AG04449 (cell line): ENCODE measurements at regions of chr6 and their contacts with region 1.

Region 1: GRCh38 chr6:30378290-30378937 is 33.5 kb downstream of the RPP21 start:
- DNase-seq: no peak
- H3K4me3 ChIP-seq: no peak overlapping the region
- CTCF ChIP-seq: no peak

Region 2: GRCh38 chr6:29995340-29995777 is 383.1 kb before region 1 on chr6:
- CTCF ChIA-PET with region 1: no interaction called
- POLR2A ChIA-PET with region 1: no interaction called
- DNase-seq: no peak
- H3K4me3 ChIP-seq: no peak overlapping the region
- CTCF ChIP-seq: no peak

Region 3: DNA sequence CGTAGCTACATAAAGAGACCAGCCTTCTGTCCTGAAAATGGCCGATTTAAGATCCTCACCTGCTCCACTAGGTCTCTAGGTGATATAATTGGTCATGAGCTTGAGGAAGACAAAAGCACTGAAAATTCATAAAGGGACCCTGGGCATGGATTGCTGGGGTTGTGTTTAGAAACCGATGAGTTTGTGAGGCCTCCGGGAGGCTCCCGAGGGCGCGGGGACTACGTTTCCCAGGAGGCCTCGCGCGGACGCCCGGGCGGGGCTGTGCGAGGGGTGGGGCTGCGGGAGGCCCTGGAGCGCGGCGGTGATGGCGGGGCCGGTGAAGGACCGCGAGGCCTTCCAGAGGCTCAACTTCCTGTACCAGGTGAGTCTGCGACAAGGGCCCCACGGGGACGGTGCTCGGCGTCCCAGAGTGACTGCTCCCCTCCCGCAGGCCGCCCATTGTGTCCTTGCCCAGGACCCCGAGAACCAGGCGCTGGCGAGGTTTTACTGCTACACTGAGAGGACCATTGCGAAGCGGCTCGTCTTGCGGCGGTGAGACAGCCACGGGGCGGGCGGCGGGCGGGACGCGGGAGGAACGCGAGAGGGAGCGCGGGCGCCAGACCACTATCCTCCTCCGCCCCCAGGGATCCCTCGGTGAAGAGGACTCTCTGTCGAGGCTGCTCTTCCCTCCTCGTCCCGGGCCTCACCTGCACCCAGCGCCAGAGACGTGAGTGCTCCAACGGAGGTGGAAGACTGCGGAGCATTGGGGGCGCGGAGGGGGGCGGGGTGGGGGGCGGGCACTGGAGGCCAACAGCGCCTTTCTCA is 33.3 kb before region 1 on chr6 and contains the start of gene RPP21:
- CTCF ChIA-PET with region 1: no interaction called
- POLR2A ChIA-PET with region 1: no interaction called
- DNase-seq: no peak
- H3K4me3 ChIP-seq: peak within 1 kb of the TSS; percentile 92
- CTCF ChIP-seq: no peak

Region 4: GRCh38 chr6:30357678-30358540 is 20.5 kb before region 1 on chr6:
- CTCF ChIA-PET with region 1: interaction called, 10 read pairs
- POLR2A ChIA-PET with region 1: no interaction called
- DNase-seq: peak; percentile 17
- H3K4me3 ChIP-seq: peak overlapping the region; percentile 57
- CTCF ChIP-seq: peak; percentile 47

Region 5: GRCh38 chr6:30447237-30447636 is 68.8 kb after region 1 on chr6:
- CTCF ChIA-PET with region 1: no interaction called
- POLR2A ChIA-PET with region 1: no interaction called
- DNase-seq: no peak
- H3K4me3 ChIP-seq: no peak overlapping the region
- CTCF ChIP-seq: peak; percentile 36